Cardiac septum (tissue), 1 donor: ENCODE measurements at regions of chr9 and their contacts with region 1.

Region 1: DNA sequence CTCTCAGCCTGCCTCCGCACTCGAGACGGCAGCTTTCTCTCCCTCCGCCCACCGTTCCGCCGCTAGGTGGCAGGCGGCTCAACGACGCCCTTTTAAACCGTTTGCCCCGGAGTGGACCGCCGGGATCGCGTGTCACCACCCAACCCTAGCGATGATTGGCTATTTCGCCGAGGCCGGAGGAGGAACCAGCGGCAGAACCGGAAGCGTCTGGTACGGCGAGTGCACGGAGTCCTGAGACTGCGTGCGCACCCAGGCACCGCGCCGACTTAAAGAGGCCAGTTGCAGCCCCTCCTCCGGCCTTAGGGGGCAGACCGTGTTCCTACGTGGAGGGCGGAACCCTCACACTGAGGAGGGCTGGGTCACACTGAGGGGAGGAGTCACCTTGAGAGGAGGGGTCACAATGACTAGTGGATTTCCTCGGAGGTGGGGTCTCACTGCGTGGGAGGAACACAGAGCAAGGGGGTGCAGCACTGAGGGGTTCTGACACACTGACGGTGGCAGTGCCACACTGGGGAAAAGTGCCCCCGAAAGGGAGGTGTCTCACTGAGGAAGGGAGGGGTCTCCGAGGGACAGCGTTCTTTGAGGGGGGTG is 980 bp upstream of the TESK1 start:
- DNase-seq: peak; percentile 100

Region 2: GRCh38 chr9:35116898-35117551 is 487.1 kb before region 1 on chr9:
- intact Hi-C with region 1: loop called (anchors 10 kb)
- DNase-seq: peak; percentile 94

Region 3: GRCh38 chr9:35616681-35617459 is 12.8 kb after region 1 on chr9:
- intact Hi-C with region 1: no loop called
- DNase-seq: peak; percentile 83

Region 4: DNA sequence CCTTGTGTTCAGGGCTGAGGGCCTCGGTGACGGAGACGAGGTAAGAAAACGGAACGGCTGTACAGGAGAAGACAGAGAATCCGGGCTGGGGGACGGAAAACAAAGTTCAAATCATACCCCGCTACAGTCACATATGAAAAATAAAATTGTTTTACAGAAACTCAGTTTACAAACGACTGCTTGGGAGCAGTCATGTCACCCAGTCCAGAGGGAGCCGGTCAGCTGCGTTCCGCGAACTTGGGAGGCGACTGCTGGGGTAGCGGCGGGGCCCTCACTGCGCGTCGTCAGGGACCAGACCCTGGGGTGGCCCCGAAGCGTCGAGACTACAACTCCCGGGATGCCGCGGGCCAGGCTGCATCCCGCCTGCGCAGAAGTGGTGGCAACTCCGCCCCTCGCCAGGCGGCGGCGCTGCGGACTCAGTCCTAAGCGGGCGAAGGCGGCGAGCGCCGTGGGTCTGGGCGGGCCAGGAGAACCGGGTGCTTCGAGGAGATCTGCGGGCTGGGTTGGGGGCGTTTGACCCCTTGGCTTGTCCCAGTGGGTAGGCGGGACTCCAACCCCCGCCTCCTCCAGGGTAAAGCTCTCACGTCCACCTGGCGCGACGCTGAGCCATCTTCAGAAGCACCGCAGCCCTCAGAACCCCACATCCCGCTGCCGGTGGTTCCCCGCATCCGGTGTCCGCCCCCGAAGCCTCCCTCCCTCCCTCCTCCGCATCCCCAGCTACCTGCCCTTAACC is 42.6 kb after region 1 on chr9:
- intact Hi-C with region 1: loop called (anchors 5 kb)
- DNase-seq: peak; percentile 96

Region 5: DNA sequence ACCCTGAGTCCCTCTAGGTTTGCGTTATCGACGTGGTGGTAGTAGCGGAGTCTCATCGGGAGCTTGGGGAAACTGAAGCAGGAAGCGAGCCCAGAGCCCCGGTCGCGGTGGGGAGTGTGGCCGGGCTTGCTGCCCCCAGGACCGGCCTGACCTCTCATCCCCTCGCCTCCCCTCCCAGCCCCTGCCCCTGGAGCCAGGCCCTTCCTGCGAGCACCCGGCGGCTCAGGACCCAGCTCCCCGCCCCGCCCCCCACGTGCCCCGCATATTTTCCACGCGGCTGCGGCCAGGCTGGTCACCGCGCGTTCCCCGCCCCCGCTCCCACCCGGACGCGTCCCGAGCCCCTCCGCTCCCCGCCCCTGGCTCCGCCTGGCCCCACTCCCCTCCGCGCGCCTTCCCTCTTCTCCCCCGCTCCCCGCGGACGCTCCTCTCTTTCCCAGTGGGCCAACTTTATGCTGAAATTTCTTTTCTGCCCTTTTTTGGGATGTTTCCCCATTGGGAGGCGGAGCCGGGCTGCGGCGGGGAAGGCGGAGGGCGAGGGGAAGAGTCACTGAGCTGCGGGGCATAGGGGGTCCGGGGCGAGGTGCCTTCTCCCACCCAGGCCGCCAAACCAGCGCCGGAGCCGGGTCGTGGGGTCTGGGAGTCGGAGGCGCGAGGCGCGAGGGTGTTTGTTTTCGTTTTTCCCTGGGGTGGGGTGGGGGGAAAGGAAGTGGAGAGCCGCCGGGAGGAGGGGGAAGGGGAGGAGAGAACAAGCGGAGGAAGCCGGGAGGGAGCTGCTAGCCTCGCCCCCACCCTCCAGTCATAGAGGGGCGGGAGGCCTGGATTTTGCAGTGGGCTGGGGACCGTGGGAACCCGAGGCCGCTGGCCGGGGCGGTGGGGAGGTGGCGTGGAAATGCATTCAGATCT is 86.6 kb after region 1 on chr9:
- intact Hi-C with region 1: loop called (anchors 1 kb)
- DNase-seq: peak; percentile 88